OCI-LY7 (cell line): ENCODE measurements at regions of chr5 and their contacts with region 1.

Region 1: GRCh38 chr5:173736923-173737412 is 120.5 kb upstream of the BOD1 start:
- DNase-seq: peak; percentile 86
- H3K4me3 ChIP-seq: peak overlapping the region; percentile 45
- H3K27ac ChIP-seq: peak overlapping the region; percentile 98
- H3K4me1 ChIP-seq: peaks cover 97% of the 10 kb centered on the region
- CTCF ChIP-seq: no peak

Region 2: DNA sequence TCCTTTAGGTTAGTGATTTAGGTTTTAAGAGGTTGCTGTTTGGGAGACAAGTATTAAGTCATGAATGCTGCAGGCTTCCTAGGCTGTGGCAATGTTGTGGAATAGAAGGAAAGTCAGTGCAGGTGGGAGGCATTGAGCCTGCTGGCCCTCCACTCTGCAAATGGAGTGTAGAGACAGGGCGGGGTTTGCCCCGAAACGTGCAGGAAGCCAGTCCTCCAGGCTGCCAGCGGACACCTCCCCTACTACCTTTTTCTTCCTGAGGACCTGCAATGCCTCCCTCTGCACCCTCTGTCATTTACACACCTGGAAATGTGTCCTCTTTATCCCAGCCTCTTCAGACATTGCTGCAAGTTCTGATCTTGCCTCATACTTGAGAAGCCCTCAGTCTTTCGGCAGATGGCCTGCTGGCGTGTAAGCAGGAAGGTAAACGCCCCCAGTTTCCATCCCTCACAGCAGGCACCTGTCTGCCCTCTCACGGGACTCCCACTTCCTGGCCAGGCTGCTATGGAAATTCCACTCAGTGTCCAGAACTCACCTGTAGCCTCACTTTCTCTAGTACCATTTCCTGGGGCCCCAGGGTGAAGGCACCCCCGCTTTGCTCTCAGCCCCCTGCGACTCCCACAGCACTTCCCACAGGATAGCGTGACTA is 38.9 kb before region 1 on chr5:
- CTCF ChIA-PET with region 1: interaction called, 5 read pairs
- POLR2A ChIA-PET with region 1: interaction called, 15 read pairs
- intact Hi-C with region 1: loop called (anchors 1 kb)
- DNase-seq: peak; percentile 83
- H3K4me3 ChIP-seq: peak overlapping the region; percentile 46
- H3K27ac ChIP-seq: peak overlapping the region; percentile 80
- H3K4me1 ChIP-seq: peaks cover 68% of the 10 kb centered on the region
- CTCF ChIP-seq: no peak

Region 3: GRCh38 chr5:173712609-173713175 is 24.3 kb before region 1 on chr5:
- CTCF ChIA-PET with region 1: no interaction called
- POLR2A ChIA-PET with region 1: interaction called, 51 read pairs
- intact Hi-C with region 1: loop called (anchors 2 kb)
- DNase-seq: no peak
- H3K4me3 ChIP-seq: no peak overlapping the region
- H3K27ac ChIP-seq: peak overlapping the region; percentile 22
- H3K4me1 ChIP-seq: peaks cover 54% of the 10 kb centered on the region
- CTCF ChIP-seq: no peak

Region 4: GRCh38 chr5:173789031-173789920 is 52.3 kb after region 1 on chr5:
- CTCF ChIA-PET with region 1: interaction called, 4 read pairs
- POLR2A ChIA-PET with region 1: interaction called, 4 read pairs
- intact Hi-C with region 1: loop called (anchors 1 kb)
- DNase-seq: peak; percentile 31
- H3K4me3 ChIP-seq: no peak overlapping the region
- H3K27ac ChIP-seq: no peak overlapping the region
- H3K4me1 ChIP-seq: peaks cover 63% of the 10 kb centered on the region
- CTCF ChIP-seq: no peak